Transverse colon (tissue), 4 donors: ENCODE measurements at regions of chr11 and their contacts with region 1.

Region 1: GRCh38 chr11:27472398-27473016 is at the start of gene LGR4:
- DNase-seq: peak; percentile 95
- H3K4me3 ChIP-seq: peak within 1 kb of the TSS; percentile 51 to 93 (median 83)
- H3K27ac ChIP-seq: peak within 1 kb of the TSS; percentile 92 to 97 (median 94)
- H3K4me1 ChIP-seq: peaks cover 0 to 29% (median 15%) of the 10 kb centered on the region in 4 donors
- H3K27me3 ChIP-seq: no peaks in the 10 kb centered on the region
- CTCF ChIP-seq: no peak
- EP300 ChIP-seq: no peak
- POLR2A ChIP-seq: peak; percentile 91
- total RNA-seq, gene LGR4: 28.7 to 165 (median 120) TPM

Region 2: DNA sequence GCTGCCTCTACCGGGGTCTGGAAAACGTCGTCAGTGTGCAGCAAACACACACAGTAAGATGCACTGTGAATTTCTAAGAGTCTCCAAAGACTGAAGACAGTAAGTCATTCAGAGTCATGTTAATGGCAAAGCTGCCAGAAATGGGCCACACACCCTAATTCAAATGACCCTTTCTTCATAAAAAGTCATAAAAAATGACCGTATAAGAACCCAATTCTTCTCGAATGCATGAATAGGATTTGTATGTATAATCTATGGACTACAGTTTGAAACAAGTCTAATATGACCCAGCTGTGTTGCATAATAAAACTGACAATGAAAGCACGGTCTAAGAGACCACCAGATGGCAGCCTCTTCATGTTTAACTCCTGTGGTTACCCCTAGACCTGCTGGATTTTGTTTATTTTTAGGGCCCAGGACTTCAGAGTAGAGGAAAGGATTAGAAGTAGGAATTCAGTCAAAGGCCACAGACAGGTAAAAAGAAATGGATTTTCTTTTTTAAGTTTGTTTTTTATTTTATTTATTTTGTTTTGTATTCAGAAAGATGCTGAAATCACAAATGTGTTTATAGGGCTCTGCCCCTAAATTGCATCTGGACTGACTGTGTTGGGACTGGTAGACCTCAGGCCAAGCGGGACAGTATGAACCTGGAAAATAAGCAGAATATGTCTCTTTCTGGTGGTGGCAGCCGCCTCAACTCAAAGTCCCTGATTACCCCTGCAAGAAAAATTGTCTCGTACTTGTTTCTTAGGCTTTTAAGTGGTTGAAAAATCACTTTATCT is 718.6 kb before region 1 on chr11:
- in situ Hi-C with region 1: no loop called
- intact Hi-C with region 1: loop called (anchors 5 kb)
- DNase-seq: peak; percentile 35
- H3K4me3 ChIP-seq: no peak overlapping the region
- H3K27ac ChIP-seq: no peak overlapping the region
- H3K4me1 ChIP-seq: peaks cover 0 to 12% (median 2%) of the 10 kb centered on the region in 4 donors
- H3K27me3 ChIP-seq: no peaks in the 10 kb centered on the region
- CTCF ChIP-seq: peak; percentile 57 to 72 (median 66)
- EP300 ChIP-seq: no peak
- POLR2A ChIP-seq: no peak

Region 3: DNA sequence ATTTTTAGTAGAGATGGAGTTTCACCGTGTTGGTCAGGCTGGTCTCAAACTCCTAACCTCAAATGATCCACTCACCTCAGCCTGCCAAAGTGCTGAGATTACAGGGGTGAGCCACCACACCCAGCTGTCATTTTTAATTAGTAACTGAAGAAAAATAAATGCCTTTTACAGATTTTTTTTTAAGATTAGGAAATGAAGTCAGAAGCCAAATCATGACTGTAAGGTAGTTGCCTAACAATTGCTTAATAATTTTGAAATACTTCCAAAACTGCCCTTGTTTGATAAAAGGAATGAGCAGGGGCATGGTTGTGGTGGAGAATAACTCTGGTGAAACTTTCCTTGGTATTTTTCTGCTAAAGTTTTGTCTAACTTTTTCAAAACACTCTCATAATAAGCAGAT is 651.8 kb before region 1 on chr11:
- in situ Hi-C with region 1: no loop called
- intact Hi-C with region 1: no loop called
- DNase-seq: no peak
- H3K4me3 ChIP-seq: no peak overlapping the region
- H3K27ac ChIP-seq: no peak overlapping the region
- H3K4me1 ChIP-seq: no peaks in the 10 kb centered on the region
- H3K27me3 ChIP-seq: no peaks in the 10 kb centered on the region
- CTCF ChIP-seq: no peak
- EP300 ChIP-seq: no peak
- POLR2A ChIP-seq: no peak

Region 4: GRCh38 chr11:26974069-26974783 is 498.3 kb before region 1 on chr11:
- in situ Hi-C with region 1: no loop called
- intact Hi-C with region 1: no loop called
- DNase-seq: no peak
- H3K4me3 ChIP-seq: no peak overlapping the region
- H3K27ac ChIP-seq: no peak overlapping the region
- H3K4me1 ChIP-seq: peaks cover 0 to 7% (median 0%) of the 10 kb centered on the region in 4 donors
- H3K27me3 ChIP-seq: no peaks in the 10 kb centered on the region
- CTCF ChIP-seq: no peak
- EP300 ChIP-seq: no peak
- POLR2A ChIP-seq: no peak

Region 5: DNA sequence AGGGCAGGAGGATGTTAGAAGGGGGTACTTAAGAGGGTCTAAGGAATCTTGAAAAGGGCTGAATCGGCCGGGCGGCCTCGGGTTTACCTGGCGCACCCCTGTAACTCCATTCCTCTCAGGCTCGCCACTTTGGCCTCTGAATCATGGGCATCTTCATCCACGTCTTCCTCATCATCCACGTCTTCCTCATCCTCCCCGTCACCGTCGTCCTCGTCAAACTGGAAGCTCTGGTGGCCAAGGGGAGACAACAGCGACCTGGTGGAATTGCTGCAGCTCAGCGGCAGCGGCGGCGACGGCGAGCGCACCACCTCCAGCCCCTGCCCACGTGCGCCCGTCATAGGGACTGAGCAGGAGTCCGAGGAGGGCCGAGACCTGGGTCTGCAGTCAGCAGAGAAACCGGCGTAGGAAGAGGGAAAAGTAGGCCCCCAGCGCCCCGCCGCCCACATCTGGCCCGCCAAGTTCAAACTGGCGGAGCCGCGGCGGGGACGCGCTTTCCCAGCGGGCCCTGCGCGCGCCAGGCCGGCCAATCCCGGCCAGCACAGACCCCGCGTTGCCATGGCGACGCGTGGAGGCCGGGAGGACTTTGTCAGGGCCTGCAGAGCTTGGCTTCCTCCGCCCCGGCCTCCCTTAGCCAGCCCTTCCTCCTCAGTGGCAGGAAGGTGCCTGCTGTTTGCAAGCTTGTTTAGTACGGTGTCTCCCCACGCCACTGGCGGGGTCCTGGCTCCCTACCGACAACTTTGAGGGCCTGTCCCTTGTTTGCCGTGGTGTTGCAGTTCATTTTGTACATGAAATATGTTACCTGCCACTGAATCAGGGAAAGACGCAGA is 109.5 kb before region 1 on chr11 and contains the start of gene CCDC34:
- in situ Hi-C with region 1: loop called in 1 of 4 experiments (anchors 25 kb)
- intact Hi-C with region 1: no loop called
- DNase-seq: peak; percentile 93
- H3K4me3 ChIP-seq: peak within 1 kb of the TSS; percentile 39 to 76 (median 70)
- H3K27ac ChIP-seq: peak within 1 kb of the TSS; percentile 62 to 73 (median 70)
- H3K4me1 ChIP-seq: peaks cover 3 to 25% (median 9%) of the 10 kb centered on the region in 4 donors
- H3K27me3 ChIP-seq: no peaks in the 10 kb centered on the region
- CTCF ChIP-seq: no peak
- EP300 ChIP-seq: no peak
- POLR2A ChIP-seq: peak; percentile 45
- total RNA-seq, gene CCDC34: 0.40 to 6.8 (median 5.6) TPM in 3 of 4 donors, not detected in the other

Region 6: DNA sequence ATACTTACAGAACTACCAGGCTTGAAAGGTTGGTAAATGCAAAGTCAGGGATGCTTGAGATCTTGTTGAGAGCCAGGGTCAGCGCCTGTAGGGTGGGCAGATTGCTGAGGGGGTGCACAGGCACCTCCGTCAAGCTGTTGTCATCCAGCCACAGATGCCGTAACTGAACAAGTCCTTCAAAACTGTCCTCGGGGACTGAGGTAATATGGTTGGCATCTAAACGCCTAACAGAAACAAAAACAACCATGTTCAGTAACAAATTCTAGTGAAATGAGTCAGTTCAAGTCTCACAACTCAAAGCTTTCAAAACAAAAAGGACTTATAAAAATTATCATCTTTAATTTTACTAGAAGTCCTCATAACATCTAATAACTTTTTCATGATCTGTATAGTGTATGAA is 87.3 kb before region 1 on chr11:
- in situ Hi-C with region 1: loop called in 1 of 4 experiments (anchors 10 kb)
- intact Hi-C with region 1: no loop called
- DNase-seq: no peak
- H3K4me3 ChIP-seq: no peak overlapping the region
- H3K27ac ChIP-seq: no peak overlapping the region
- H3K4me1 ChIP-seq: peaks cover 0 to 26% (median 10%) of the 10 kb centered on the region in 4 donors
- H3K27me3 ChIP-seq: no peaks in the 10 kb centered on the region
- CTCF ChIP-seq: no peak
- EP300 ChIP-seq: no peak
- POLR2A ChIP-seq: no peak

Region 7: GRCh38 chr11:27443746-27444507 is 28.6 kb before region 1 on chr11:
- in situ Hi-C with region 1: no loop called
- intact Hi-C with region 1: no loop called
- DNase-seq: no peak
- H3K4me3 ChIP-seq: no peak overlapping the region
- H3K27ac ChIP-seq: peak overlapping the region in 1 of 4 donors; percentile 7
- H3K4me1 ChIP-seq: peaks cover 0 to 28% (median 7%) of the 10 kb centered on the region in 4 donors
- H3K27me3 ChIP-seq: no peaks in the 10 kb centered on the region
- CTCF ChIP-seq: no peak
- EP300 ChIP-seq: no peak
- POLR2A ChIP-seq: no peak

Region 8: GRCh38 chr11:28581286-28582242 is 1109.1 kb after region 1 on chr11:
- in situ Hi-C with region 1: no loop called
- intact Hi-C with region 1: no loop called
- DNase-seq: no peak
- H3K4me3 ChIP-seq: no peak overlapping the region
- H3K27ac ChIP-seq: no peak overlapping the region
- H3K4me1 ChIP-seq: no peaks in the 10 kb centered on the region
- H3K27me3 ChIP-seq: no peaks in the 10 kb centered on the region
- CTCF ChIP-seq: no peak
- EP300 ChIP-seq: no peak
- POLR2A ChIP-seq: no peak